A673 (cell line): ENCODE measurements at regions of chr17 and their contacts with region 1.

Region 1: GRCh38 chr17:8818654-8819330 is 19.6 kb upstream of the MFSD6L start:
- DNase-seq: no peak
- H3K4me3 ChIP-seq: no peak overlapping the region
- H3K27ac ChIP-seq: no peak overlapping the region
- H3K4me1 ChIP-seq: no peaks in the 10 kb centered on the region
- H3K27me3 ChIP-seq: peaks cover 33% of the 10 kb centered on the region
- CTCF ChIP-seq: no peak

Region 2: DNA sequence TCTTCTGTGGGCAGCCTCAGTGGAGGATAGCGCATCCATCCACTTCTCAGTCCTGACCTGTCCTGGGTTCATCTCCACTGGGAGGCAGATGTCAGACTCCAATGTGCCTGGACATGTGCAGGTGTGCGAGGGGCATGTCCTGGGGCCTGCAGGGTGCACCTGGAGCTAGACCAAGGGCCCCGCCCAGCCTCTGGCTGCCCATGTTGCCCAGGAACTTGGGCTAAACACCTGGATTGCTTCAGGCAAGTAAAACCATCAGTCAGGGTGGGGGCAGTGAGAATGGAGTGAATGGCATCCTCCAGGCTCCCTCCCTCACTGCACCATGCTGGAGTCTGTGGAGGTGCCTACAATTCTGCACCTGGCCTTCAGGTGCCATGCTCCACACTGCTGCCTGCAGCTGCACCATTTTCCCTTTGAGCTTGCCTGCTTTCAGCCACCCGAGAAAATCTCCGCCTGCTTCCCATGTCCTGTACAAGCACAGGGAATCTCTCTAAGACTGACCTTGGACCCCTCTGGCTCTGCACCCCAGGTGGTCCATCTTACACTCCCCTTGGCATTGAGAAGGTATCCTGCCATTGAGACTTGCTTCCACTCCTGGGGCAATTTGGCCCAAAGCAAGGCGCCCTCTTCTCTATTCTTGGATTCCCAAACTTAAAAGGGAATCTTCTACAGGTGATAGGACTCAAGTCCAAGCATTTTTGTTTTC is 17.5 kb before region 1 on chr17:
- CTCF ChIA-PET with region 1: interaction called, 4 read pairs
- POLR2A ChIA-PET with region 1: no interaction called
- intact Hi-C with region 1: loop called (anchors 1 kb)
- DNase-seq: no peak
- H3K4me3 ChIP-seq: no peak overlapping the region
- H3K27ac ChIP-seq: no peak overlapping the region
- H3K4me1 ChIP-seq: no peaks in the 10 kb centered on the region
- H3K27me3 ChIP-seq: peaks cover 6% of the 10 kb centered on the region
- CTCF ChIP-seq: no peak